Activated CD4-positive, alpha-beta memory T cell treated with anti-CD3 and anti-CD28 coated beads, Interleukin-2, amount 10 ng/mL, durations not matched to agents 7 days and 5 days (primary cell): ENCODE measurements at regions of chrX and their contacts with region 1.

Region 1: GRCh38 chrX:135185795-135186443 is 14.7 kb upstream of the CT55 start:
- DNase-seq: peak; percentile 25
- H3K4me3 Mint-ChIP-seq: no peak overlapping the region
- H3K27ac Mint-ChIP-seq: no peak overlapping the region
- H3K4me1 Mint-ChIP-seq: peaks cover 1% of the 10 kb centered on the region
- H3K27me3 Mint-ChIP-seq: peaks cover 45% of the 10 kb centered on the region

Region 2: DNA sequence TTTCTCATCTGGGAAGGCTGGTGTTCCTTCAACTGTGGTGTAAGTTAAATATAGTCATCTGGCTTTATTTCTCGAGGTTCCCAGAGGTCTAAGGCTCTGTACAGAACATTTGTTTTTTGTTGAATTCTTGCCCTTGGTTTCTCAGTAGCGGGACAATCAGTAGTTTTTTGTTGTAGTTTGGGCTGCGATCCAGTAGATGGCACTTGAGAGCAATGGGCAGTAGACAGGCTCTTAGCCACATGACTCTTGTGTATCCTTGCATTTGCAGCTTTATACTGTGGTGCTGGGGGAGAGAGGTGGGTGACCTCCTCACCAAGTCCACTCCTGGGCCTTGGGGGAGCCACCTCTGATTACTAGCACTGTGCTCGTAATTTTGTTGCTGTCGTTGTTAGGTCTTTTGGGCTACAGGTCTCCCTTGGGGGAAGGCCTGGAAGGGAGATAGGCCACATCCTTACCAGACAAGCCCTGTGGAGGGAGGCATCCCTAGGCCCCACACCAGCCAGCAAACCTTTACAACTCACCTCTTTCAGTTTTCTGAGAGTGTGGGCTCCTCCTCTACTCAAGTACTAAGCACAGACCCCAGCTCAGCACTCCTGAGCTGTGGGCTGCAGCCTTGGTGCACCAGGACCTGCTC is 73.7 kb before region 1 on chrX:
- CTCF ChIA-PET with region 1: interaction called, 11 read pairs
- POLR2A ChIA-PET with region 1: no interaction called
- DNase-seq: peak; percentile 31
- H3K4me3 Mint-ChIP-seq: no peak overlapping the region
- H3K27ac Mint-ChIP-seq: no peak overlapping the region
- H3K4me1 Mint-ChIP-seq: no peaks in the 10 kb centered on the region
- H3K27me3 Mint-ChIP-seq: peaks cover 24% of the 10 kb centered on the region

Region 3: GRCh38 chrX:135396109-135396508 is 210.2 kb after region 1 on chrX:
- CTCF ChIA-PET with region 1: no interaction called
- POLR2A ChIA-PET with region 1: no interaction called
- DNase-seq: no peak
- H3K4me3 Mint-ChIP-seq: no peak overlapping the region
- H3K27ac Mint-ChIP-seq: no peak overlapping the region
- H3K4me1 Mint-ChIP-seq: no peaks in the 10 kb centered on the region
- H3K27me3 Mint-ChIP-seq: no peaks in the 10 kb centered on the region